Endothelial cell of umbilical vein (primary cell): ENCODE measurements at regions of chr17 and their contacts with region 1.

Region 1: DNA sequence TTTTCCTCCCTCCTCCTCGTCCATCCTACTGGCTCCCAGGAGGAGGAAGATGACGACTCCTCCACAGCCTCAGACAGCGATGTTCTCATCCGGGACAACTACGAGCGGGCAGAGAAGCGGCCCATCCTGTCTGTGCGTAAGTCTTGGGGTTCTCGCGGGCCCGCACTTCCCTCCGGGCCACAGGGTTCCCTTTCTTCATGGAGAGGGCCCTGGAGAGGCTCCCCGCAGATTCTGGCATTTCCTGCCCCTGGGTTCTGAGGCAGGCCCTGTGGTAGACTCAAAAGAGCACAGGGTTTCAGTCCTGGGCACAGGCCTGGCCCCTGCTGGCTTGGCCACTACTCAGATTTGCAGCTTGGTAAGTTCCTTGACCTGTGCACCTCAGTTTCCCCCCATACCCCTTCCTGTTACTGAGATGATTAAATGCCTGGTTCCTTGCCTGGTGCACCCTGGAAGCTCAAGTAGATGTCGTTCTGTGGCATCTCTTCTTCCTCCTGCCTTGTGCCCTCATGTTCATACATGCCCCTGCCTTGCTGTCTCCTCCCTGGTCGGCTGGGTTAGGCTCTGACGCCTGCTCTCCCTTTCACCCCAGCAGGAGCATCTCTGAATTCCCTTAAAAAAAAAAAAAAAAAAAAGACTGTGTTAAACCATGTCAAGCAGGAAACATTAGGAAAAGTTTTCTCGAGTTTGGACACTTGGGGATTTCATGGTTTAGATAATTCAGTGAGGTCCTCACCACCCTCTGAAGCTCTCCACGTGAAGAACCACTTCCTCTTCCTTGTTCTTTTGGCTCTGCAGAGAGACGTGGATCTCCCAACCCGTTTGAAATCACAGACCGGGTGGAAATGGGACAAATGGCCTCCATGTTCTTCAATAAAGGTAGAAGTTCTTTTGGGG is 14.3 kb upstream of the NAT9 start:
- DNase-seq: no peak
- H3K4me3 ChIP-seq: no peak overlapping the region
- H3K27ac ChIP-seq: no peak overlapping the region
- H3K4me1 ChIP-seq: no peaks in the 10 kb centered on the region
- H3K27me3 ChIP-seq: no peaks in the 10 kb centered on the region
- CTCF ChIP-seq: no peak
- POLR2A ChIP-seq: no peak

Region 2: DNA sequence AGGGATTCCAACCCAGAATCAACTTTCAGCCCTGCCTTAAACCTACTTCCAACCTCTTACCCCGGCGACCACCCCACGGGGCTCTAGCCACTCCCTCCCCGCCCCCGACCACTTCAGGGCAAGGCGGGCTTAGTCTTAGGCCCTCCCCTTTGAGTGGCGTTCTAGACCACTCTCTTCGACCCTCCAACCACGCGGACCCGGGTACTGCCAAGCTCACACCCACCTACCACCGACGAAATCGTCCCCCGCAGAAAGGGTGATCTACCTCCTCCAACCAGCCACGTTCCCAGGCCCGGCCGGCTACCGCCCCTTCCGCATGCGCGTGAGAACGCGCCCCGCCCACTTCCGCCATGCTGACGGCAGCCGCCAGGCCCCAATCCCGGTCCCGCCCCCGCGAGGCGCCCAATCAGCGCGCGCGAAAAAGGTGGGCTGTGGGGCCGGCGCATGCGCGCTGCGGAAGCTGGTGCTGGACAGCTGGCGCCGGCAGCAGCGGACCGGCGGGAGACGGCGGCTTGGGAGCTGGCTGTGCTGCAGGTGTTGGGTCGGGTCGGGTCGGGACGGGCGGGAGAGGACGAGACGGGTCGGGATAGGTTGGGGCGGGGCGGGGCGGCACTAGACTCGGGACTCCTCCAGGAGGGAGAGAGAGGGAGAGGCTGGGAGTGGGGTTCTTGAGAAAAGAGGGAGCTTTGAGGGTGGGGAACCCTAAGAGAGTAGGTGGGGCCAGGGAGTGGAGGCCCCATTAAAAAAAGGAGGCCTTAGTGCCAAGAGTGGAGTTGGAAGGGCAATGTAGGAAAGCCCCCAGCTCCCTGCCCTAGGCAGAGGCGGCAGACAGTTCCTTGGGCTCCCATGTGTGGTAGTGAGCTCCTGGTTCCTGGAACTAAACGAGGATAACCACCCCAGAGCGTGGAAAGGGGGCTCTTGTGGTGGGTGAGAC is 14.1 kb before region 1 on chr17 and contains the start of gene NAT9:
- CTCF ChIA-PET with region 1: interaction called, 11 read pairs
- POLR2A ChIA-PET with region 1: no interaction called
- dilution Hi-C with region 1: no loop called
- intact Hi-C with region 1: no loop called
- DNase-seq: peak; percentile 98
- H3K4me3 ChIP-seq: peak within 1 kb of the TSS; percentile 49 to 85 (median 75)
- H3K27ac ChIP-seq: peak within 1 kb of the TSS; percentile 65
- H3K4me1 ChIP-seq: peaks cover 7% of the 10 kb centered on the region
- H3K27me3 ChIP-seq: no peaks in the 10 kb centered on the region
- CTCF ChIP-seq: no peak
- POLR2A ChIP-seq: peak; percentile 47
- total RNA-seq, gene NAT9: 44.8 and 45.8 TPM in 2 replicates

Region 3: DNA sequence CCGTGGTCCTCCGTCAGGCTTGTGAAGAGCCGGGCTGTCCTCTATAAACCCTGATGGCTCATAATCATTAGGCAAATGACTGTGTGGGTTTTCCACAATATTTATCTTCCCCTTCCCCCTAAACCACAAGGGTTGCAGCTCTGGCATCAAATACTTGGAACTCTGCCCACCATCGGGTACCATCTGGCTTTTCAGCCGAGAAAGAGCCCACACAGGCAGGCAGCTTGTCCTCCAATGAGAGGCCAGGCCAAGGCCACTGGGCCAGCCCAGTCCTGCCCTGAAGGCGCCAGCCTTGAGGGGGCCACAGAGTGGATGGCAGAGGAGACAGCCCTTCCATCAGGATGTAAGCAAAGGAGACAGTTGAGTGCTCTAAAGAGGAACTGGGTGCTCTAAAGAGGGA is 17.5 kb after region 1 on chr17:
- CTCF ChIA-PET with region 1: interaction called, 14 read pairs
- POLR2A ChIA-PET with region 1: no interaction called
- dilution Hi-C with region 1: no loop called
- intact Hi-C with region 1: no loop called
- DNase-seq: no peak
- H3K4me3 ChIP-seq: no peak overlapping the region
- H3K27ac ChIP-seq: no peak overlapping the region
- H3K4me1 ChIP-seq: no peaks in the 10 kb centered on the region
- H3K27me3 ChIP-seq: no peaks in the 10 kb centered on the region
- CTCF ChIP-seq: no peak
- POLR2A ChIP-seq: no peak

Region 4: GRCh38 chr17:74825952-74826719 is 35.7 kb after region 1 on chr17:
- CTCF ChIA-PET with region 1: interaction called, 21 read pairs
- POLR2A ChIA-PET with region 1: no interaction called
- dilution Hi-C with region 1: no loop called
- intact Hi-C with region 1: loop called (anchors 1 kb)
- DNase-seq: peak; percentile 77
- H3K4me3 ChIP-seq: no peak overlapping the region
- H3K27ac ChIP-seq: no peak overlapping the region
- H3K4me1 ChIP-seq: peaks cover 13% of the 10 kb centered on the region
- H3K27me3 ChIP-seq: no peaks in the 10 kb centered on the region
- CTCF ChIP-seq: no peak
- POLR2A ChIP-seq: no peak

Region 5: DNA sequence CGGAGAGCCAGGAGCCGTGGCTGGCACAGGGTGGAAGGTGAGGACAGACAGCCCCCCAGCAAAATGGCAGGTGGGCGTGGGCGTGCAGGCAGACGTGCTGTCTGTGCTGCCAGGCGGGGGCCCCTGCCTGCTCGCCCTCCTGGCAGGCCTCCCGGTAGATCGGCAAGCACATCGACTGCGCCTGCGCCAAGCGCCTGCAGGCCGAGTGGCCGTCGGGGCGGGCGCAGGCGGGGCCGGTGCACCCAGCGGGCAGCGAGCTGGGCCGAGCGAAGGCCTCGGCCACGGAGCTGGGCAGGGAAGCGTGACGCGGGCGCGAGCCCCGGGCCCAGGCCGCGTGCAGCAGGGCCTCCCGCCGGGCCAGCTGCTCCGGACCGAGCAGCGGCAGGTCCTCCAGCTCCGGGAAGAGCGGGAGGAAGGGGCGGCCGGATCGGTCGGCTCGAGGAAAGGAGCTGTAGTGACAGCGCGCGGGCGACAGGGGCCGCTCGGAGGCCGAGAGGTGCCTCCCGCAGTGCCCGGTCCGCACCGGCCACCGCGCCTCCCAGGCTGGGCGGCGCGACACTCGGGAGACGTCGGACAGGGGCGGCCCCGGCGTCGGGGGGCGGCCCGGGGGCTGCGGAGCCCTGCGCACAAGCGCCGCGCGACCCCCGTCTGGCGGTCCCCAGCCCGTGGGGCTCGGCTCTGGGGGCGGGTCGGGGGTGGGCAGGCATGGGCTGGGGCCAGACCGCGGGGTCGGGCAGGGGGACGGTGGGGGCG is 52.4 kb after region 1 on chr17:
- CTCF ChIA-PET with region 1: interaction called, 26 read pairs
- POLR2A ChIA-PET with region 1: no interaction called
- dilution Hi-C with region 1: no loop called
- intact Hi-C with region 1: loop called (anchors 1 kb)
- DNase-seq: peak; percentile 82
- H3K4me3 ChIP-seq: peak overlapping the region in 1 of 3 experiments; percentile 43
- H3K27ac ChIP-seq: no peak overlapping the region
- H3K4me1 ChIP-seq: no peaks in the 10 kb centered on the region
- H3K27me3 ChIP-seq: no peaks in the 10 kb centered on the region
- CTCF ChIP-seq: peak; percentile 50 to 64
- POLR2A ChIP-seq: no peak